ENCODE measurements at regions of chr10 and their contacts with region 1.

Region 1: GRCh38 chr10:51667678-51668335 is 31.6 kb downstream of the CSTF2T start:
- DNase-seq: no peak
- H3K4me3 ChIP-seq: no peak overlapping the region
- H3K27ac ChIP-seq: no peak overlapping the region
- H3K4me1 ChIP-seq: no peaks in the 10 kb centered on the region
- H3K27me3 ChIP-seq: no peaks in the 10 kb centered on the region
- CTCF ChIP-seq: no peak

Region 2: DNA sequence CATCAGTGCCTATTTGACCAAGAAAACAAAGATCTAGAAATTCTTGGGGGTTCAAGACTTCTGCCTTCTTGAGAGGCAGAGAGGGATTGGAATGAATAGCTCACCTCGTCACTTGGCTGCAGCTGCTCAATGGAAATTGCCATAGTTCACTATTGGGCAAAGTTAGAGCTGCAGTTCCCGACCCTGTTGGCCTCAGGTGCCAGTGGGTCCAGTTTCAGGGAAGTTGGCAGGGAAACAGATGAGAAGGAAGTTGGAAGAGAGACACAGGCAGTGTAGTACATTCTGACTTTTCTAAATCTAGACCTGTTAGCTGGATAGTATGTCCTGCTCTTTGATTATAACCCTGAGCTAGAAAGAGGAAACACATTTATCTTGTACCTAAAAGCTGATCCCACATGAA is 801.5 kb before region 1 on chr10:
- CTCF ChIA-PET with region 1: no interaction called
- POLR2A ChIA-PET with region 1: interaction called, 12 read pairs
- intact Hi-C with region 1: no loop called
- DNase-seq: no peak
- H3K4me3 ChIP-seq: no peak overlapping the region
- H3K27ac ChIP-seq: no peak overlapping the region
- H3K4me1 ChIP-seq: no peaks in the 10 kb centered on the region
- H3K27me3 ChIP-seq: no peaks in the 10 kb centered on the region
- CTCF ChIP-seq: no peak

Region 3: GRCh38 chr10:51617576-51618235 is 50.1 kb before region 1 on chr10:
- CTCF ChIA-PET with region 1: no interaction called
- POLR2A ChIA-PET with region 1: no interaction called
- intact Hi-C with region 1: no loop called
- DNase-seq: no peak
- H3K4me3 ChIP-seq: no peak overlapping the region
- H3K27ac ChIP-seq: no peak overlapping the region
- H3K4me1 ChIP-seq: no peaks in the 10 kb centered on the region
- H3K27me3 ChIP-seq: no peaks in the 10 kb centered on the region
- CTCF ChIP-seq: no peak

Region 4: DNA sequence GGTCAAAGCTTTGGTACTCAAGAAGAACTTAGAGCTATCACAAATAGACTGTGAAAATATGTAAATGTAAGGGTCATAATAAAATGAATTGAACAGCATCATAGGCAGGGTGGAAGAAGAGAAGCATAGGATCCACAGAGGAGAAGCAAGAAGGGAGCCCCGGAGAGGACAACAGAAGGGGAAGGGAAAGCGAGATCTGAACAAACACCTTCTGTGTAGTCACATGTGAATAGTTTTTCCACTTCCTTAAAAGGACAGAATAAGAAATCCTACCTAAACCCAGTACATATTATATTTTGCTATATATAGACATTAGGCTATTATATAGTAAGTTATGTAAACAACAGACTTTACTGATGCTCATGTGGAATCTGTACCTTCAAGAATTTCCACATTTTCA is 806.5 kb after region 1 on chr10:
- CTCF ChIA-PET with region 1: no interaction called
- POLR2A ChIA-PET with region 1: no interaction called
- intact Hi-C with region 1: no loop called
- DNase-seq: no peak
- H3K4me3 ChIP-seq: no peak overlapping the region
- H3K27ac ChIP-seq: no peak overlapping the region
- H3K4me1 ChIP-seq: 0 out of 2 replicates have a peak, but pooled peaks cover 3% of the 10 kb centered on the region
- H3K27me3 ChIP-seq: no peaks in the 10 kb centered on the region
- CTCF ChIP-seq: no peak

Measured in PC-9 (cell line).